ENCODE measurements at regions of chr13 and their contacts with region 1.

Region 1: GRCh38 chr13:80342471-80343380 is 1.8 kb upstream of the SPRY2 start:
- DNase-seq: peak; percentile 66
- ATAC-seq: peak; percentile 31
- H3K4me3 ChIP-seq: peak overlapping the region; percentile 53
- H3K27ac ChIP-seq: peak overlapping the region; percentile 74
- H3K4me1 ChIP-seq: no peaks in the 10 kb centered on the region; the same call in 1 of the 2 replicates
- H3K27me3 ChIP-seq: no peaks in the 10 kb centered on the region
- CTCF ChIP-seq: peak; percentile 96
- POLR2A ChIP-seq: peak; percentile 63; the same call in 1 of the 2 replicates
- RAD21 ChIP-seq: peak; percentile 71

Region 2: GRCh38 chr13:79423801-79424642 is 918.7 kb before region 1 on chr13:
- CTCF ChIA-PET with region 1: interaction called, 4 read pairs
- POLR2A ChIA-PET with region 1: no interaction called
- dilution Hi-C with region 1: no loop called
- in situ Hi-C with region 1: loop called (anchors 25 kb)
- intact Hi-C with region 1: loop called (anchors 10 kb)
- DNase-seq: peak; percentile 63
- ATAC-seq: peak; percentile 75
- H3K4me3 ChIP-seq: no peak overlapping the region
- H3K27ac ChIP-seq: no peak overlapping the region
- H3K4me1 ChIP-seq: no peaks in the 10 kb centered on the region
- H3K27me3 ChIP-seq: no peaks in the 10 kb centered on the region
- CTCF ChIP-seq: peak; percentile 77
- POLR2A ChIP-seq: no peak
- RAD21 ChIP-seq: peak; percentile 77

Region 3: GRCh38 chr13:79679334-79679733 is 663.4 kb before region 1 on chr13:
- CTCF ChIA-PET with region 1: interaction called, 5 read pairs
- POLR2A ChIA-PET with region 1: no interaction called
- dilution Hi-C with region 1: no loop called
- in situ Hi-C with region 1: no loop called
- intact Hi-C with region 1: loop called (anchors 2 kb)
- DNase-seq: peak; percentile 70
- ATAC-seq: peak; percentile 77
- H3K4me3 ChIP-seq: no peak overlapping the region
- H3K27ac ChIP-seq: no peak overlapping the region
- H3K4me1 ChIP-seq: no peaks in the 10 kb centered on the region; the same call in 1 of the 2 replicates
- H3K27me3 ChIP-seq: no peaks in the 10 kb centered on the region
- CTCF ChIP-seq: peak; percentile 74
- POLR2A ChIP-seq: no peak
- RAD21 ChIP-seq: peak; percentile 85

Region 4: GRCh38 chr13:79936368-79937136 is 406.2 kb before region 1 on chr13:
- CTCF ChIA-PET with region 1: no interaction called
- POLR2A ChIA-PET with region 1: interaction called, 9 read pairs
- dilution Hi-C with region 1: no loop called
- in situ Hi-C with region 1: loop called (anchors 10 kb)
- intact Hi-C with region 1: loop called (anchors 1 kb)
- DNase-seq: peak; percentile 100
- ATAC-seq: peak; percentile 92
- H3K4me3 ChIP-seq: no peak overlapping the region
- H3K27ac ChIP-seq: peak overlapping the region; percentile 98
- H3K4me1 ChIP-seq: peaks cover 20% of the 10 kb centered on the region
- H3K27me3 ChIP-seq: no peaks in the 10 kb centered on the region
- CTCF ChIP-seq: no peak
- POLR2A ChIP-seq: peak; percentile 40; the same call in 1 of the 2 replicates
- RAD21 ChIP-seq: peak; percentile 35

Region 5: GRCh38 chr13:80048802-80049201 is 293.9 kb before region 1 on chr13:
- CTCF ChIA-PET with region 1: interaction called, 5 read pairs
- POLR2A ChIA-PET with region 1: interaction called, 3 read pairs
- dilution Hi-C with region 1: no loop called
- in situ Hi-C with region 1: loop called (anchors 10 kb)
- intact Hi-C with region 1: loop called (anchors 2 kb)
- DNase-seq: peak; percentile 98
- ATAC-seq: peak; percentile 99
- H3K4me3 ChIP-seq: no peak overlapping the region
- H3K27ac ChIP-seq: no peak overlapping the region
- H3K4me1 ChIP-seq: peaks cover 7% of the 10 kb centered on the region
- H3K27me3 ChIP-seq: no peaks in the 10 kb centered on the region
- CTCF ChIP-seq: no peak
- POLR2A ChIP-seq: no peak
- RAD21 ChIP-seq: peak; percentile 39

Region 6: DNA sequence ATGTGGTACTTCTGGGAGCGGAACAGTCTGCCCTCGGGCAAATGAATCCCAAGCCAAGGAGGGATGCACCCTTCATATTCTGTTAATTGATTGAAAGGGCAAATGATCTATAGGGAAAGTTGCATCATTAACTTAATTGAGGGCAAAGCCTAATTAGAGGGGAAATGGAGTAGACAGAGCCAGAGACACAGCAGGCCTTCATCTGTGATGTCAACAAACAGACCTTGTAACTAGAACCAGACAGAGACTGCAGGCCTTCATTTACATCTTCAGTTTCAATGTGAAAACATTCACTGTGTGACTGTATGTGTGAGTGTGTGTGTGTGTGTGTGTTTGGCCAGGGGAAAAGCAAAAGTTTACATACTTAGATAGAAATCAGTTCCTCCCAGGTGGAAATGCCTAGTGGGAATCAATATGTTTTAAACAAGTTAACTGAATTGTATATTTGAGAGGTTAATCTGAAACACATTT is 128.2 kb before region 1 on chr13:
- CTCF ChIA-PET with region 1: no interaction called
- POLR2A ChIA-PET with region 1: no interaction called
- dilution Hi-C with region 1: no loop called
- in situ Hi-C with region 1: loop called (anchors 10 kb)
- intact Hi-C with region 1: loop called (anchors 5 kb)
- DNase-seq: peak; percentile 59
- ATAC-seq: no peak
- H3K4me3 ChIP-seq: no peak overlapping the region
- H3K27ac ChIP-seq: no peak overlapping the region
- H3K4me1 ChIP-seq: peaks cover 9% of the 10 kb centered on the region
- H3K27me3 ChIP-seq: no peaks in the 10 kb centered on the region
- CTCF ChIP-seq: no peak
- POLR2A ChIP-seq: no peak
- RAD21 ChIP-seq: no peak